CD4-positive, alpha-beta memory T cell (primary cell): ENCODE measurements at regions of chr21 and their contacts with region 1.

Region 1: DNA sequence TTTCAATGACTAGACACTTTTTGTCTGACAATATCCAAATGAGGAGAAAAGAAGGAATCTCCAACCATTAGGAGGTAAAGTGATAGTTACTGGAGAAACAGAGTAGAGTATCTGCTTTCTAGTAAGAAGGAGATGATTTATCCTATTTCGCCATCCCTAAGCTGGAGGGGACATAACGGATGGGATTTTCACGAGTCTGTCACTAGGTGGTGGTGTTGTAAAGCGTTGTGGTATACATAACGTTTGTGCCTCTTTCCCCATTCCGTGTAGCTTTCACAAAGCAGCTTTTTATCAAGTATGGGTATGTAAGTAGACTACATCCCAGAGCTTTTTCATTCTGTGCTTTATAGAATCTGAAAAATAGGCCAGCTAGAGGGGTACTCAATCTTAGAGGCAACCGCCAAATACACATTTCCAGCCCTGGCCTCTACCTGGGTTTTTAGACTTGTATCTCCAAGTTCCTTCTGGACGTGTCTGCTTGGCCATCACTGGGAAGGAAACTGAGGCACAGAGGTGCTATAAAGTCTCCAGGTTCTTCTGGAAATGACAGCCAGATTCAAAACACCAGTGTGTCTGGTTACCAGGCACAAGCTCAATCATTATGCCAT is 33.3 kb upstream of the FAM3B start:
- DNase-seq: peak; percentile 41 to 66 (median 65)
- H3K4me3 ChIP-seq: no peak overlapping the region
- H3K4me3 Mint-ChIP-seq: no peak overlapping the region
- H3K27ac ChIP-seq: no peak overlapping the region
- H3K27ac Mint-ChIP-seq: no peak overlapping the region
- H3K4me1 ChIP-seq: no peaks in the 10 kb centered on the region
- H3K4me1 Mint-ChIP-seq: peaks cover 0 to 1% (median 0%) of the 10 kb centered on the region in 4 donors
- H3K27me3 ChIP-seq: no peaks in the 10 kb centered on the region
- H3K27me3 Mint-ChIP-seq: peaks cover 9 to 24% of the 10 kb centered on the region in 2 donors

Region 2: GRCh38 chr21:39915881-39916280 is 1367.4 kb before region 1 on chr21:
- CTCF ChIA-PET with region 1: no interaction called
- POLR2A ChIA-PET with region 1: no interaction called
- intact Hi-C with region 1: no loop called
- DNase-seq: no peak
- H3K4me3 ChIP-seq: no peak overlapping the region
- H3K4me3 Mint-ChIP-seq: no peak overlapping the region
- H3K27ac ChIP-seq: no peak overlapping the region
- H3K27ac Mint-ChIP-seq: no peak overlapping the region
- H3K4me1 ChIP-seq: no peaks in the 10 kb centered on the region
- H3K4me1 Mint-ChIP-seq: no peaks in the 10 kb centered on the region
- H3K27me3 ChIP-seq: no peaks in the 10 kb centered on the region
- H3K27me3 Mint-ChIP-seq: no peaks in the 10 kb centered on the region

Region 3: DNA sequence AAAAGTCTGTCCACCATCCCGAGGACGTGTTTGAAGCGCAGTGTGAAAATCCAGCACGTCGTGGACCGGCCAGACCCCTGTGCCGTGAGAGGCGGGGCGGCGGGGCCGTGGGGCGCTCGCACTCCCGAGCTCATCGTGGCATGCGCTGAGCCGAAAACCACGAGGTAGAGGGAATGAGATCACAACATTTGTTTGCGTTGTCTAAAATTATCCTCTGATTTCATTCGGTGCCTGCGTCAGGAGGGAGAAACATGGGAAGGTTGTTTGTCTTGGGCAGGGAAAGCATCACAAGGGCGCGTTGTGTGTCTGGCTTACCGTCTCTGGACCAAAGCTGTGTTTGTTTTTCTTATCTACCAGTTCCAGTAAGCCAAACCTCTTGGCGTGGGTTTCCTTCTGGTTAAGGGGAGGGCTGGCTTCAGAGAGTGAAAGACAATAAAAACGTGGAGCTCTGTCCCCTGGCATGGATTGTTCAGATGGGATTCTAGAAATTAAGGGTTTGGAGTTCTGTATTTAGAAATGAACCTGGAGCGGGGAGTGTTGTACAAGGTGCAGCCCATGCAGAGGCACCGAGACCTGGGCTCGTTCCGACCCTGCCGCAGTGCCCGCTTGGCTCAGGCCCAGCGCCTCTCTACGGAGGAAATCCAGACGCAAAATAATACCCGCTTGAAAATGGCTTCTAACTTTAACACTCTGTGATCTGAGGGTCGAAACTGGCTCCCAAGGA is 35.6 kb before region 1 on chr21:
- CTCF ChIA-PET with region 1: no interaction called
- POLR2A ChIA-PET with region 1: no interaction called
- intact Hi-C with region 1: no loop called
- DNase-seq: no peak
- H3K4me3 ChIP-seq: no peak overlapping the region
- H3K4me3 Mint-ChIP-seq: no peak overlapping the region
- H3K27ac ChIP-seq: no peak overlapping the region
- H3K27ac Mint-ChIP-seq: no peak overlapping the region
- H3K4me1 ChIP-seq: no peaks in the 10 kb centered on the region
- H3K4me1 Mint-ChIP-seq: no peaks in the 10 kb centered on the region
- H3K27me3 ChIP-seq: no peaks in the 10 kb centered on the region
- H3K27me3 Mint-ChIP-seq: peaks cover 7 to 18% of the 10 kb centered on the region in 2 donors

Region 4: GRCh38 chr21:41361786-41362604 is 78.7 kb after region 1 on chr21 and contains the start of gene MX2:
- CTCF ChIA-PET with region 1: interaction called, 8 read pairs
- POLR2A ChIA-PET with region 1: interaction called, 7 read pairs
- intact Hi-C with region 1: loop called (anchors 1 kb)
- DNase-seq: peak; percentile 91 to 94 (median 94)
- H3K4me3 ChIP-seq: peak within 1 kb of the TSS; percentile 27 to 91
- H3K4me3 Mint-ChIP-seq: peak within 1 kb of the TSS; percentile 89 to 97 (median 94)
- H3K27ac ChIP-seq: peak within 1 kb of the TSS; percentile 93
- H3K27ac Mint-ChIP-seq: peak within 1 kb of the TSS; percentile 99 to 100 (median 100)
- H3K4me1 ChIP-seq: peaks cover 40% of the 10 kb centered on the region
- H3K4me1 Mint-ChIP-seq: peaks cover 37 to 61% (median 55%) of the 10 kb centered on the region in 4 donors
- H3K27me3 ChIP-seq: no peaks in the 10 kb centered on the region
- H3K27me3 Mint-ChIP-seq: no peaks in the 10 kb centered on the region
- total RNA-seq, gene MX2: 98.7 to 107 TPM

Region 5: DNA sequence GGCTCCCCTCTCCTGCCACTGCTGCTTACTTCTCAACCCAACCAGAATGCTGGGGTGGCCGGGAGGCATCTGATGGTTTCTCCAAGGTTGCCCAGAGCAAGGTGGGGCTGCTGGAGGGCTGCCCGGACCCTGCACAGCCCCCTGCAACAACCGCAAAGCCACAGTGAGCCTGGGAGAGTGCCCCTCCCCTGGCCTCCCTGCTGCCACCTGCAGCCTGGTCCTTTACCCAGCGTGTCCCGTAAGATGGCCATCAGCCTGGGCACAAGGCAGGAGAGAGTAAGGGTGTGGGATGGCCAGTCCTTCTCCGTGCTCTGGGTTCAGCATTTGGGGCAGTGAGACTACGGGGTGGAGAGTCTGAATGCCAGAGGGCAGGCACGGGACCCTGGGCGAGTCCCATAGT is 95.6 kb after region 1 on chr21:
- CTCF ChIA-PET with region 1: interaction called, 12 read pairs
- POLR2A ChIA-PET with region 1: no interaction called
- intact Hi-C with region 1: no loop called
- DNase-seq: no peak
- H3K4me3 ChIP-seq: no peak overlapping the region
- H3K4me3 Mint-ChIP-seq: no peak overlapping the region
- H3K27ac ChIP-seq: no peak overlapping the region
- H3K27ac Mint-ChIP-seq: no peak overlapping the region
- H3K4me1 ChIP-seq: peaks cover 1% of the 10 kb centered on the region
- H3K4me1 Mint-ChIP-seq: peaks cover 4 to 13% (median 8%) of the 10 kb centered on the region in 4 donors
- H3K27me3 ChIP-seq: no peaks in the 10 kb centered on the region
- H3K27me3 Mint-ChIP-seq: no peaks in the 10 kb centered on the region

Region 6: GRCh38 chr21:41425954-41426675 is 142.8 kb after region 1 on chr21 and contains the start of gene MX1:
- CTCF ChIA-PET with region 1: interaction called, 24 read pairs
- POLR2A ChIA-PET with region 1: no interaction called
- intact Hi-C with region 1: no loop called
- DNase-seq: peak; percentile 86 to 90 (median 88)
- H3K4me3 ChIP-seq: peak within 1 kb of the TSS; percentile 79 to 91
- H3K4me3 Mint-ChIP-seq: peak within 1 kb of the TSS; percentile 95 to 99 (median 98)
- H3K27ac ChIP-seq: peak within 1 kb of the TSS; percentile 88
- H3K27ac Mint-ChIP-seq: peak within 1 kb of the TSS; percentile 93 to 98 (median 96)
- H3K4me1 ChIP-seq: peaks cover 22% of the 10 kb centered on the region
- H3K4me1 Mint-ChIP-seq: peaks cover 27 to 69% (median 47%) of the 10 kb centered on the region in 4 donors
- H3K27me3 ChIP-seq: no peaks in the 10 kb centered on the region
- H3K27me3 Mint-ChIP-seq: no peaks in the 10 kb centered on the region
- total RNA-seq, gene MX1: 73.7 to 75.3 TPM

Region 7: GRCh38 chr21:41610042-41610839 is 326.9 kb after region 1 on chr21:
- CTCF ChIA-PET with region 1: no interaction called
- POLR2A ChIA-PET with region 1: no interaction called
- intact Hi-C with region 1: loop called (anchors 2 kb)
- DNase-seq: no peak
- H3K4me3 ChIP-seq: no peak overlapping the region
- H3K4me3 Mint-ChIP-seq: peak overlapping the region in 1 of 8 donors; percentile 18
- H3K27ac ChIP-seq: no peak overlapping the region
- H3K27ac Mint-ChIP-seq: no peak overlapping the region
- H3K4me1 ChIP-seq: no peaks in the 10 kb centered on the region
- H3K4me1 Mint-ChIP-seq: no peaks in the 10 kb centered on the region
- H3K27me3 ChIP-seq: no peaks in the 10 kb centered on the region
- H3K27me3 Mint-ChIP-seq: peaks cover 19 to 39% of the 10 kb centered on the region in 2 donors

Region 8: DNA sequence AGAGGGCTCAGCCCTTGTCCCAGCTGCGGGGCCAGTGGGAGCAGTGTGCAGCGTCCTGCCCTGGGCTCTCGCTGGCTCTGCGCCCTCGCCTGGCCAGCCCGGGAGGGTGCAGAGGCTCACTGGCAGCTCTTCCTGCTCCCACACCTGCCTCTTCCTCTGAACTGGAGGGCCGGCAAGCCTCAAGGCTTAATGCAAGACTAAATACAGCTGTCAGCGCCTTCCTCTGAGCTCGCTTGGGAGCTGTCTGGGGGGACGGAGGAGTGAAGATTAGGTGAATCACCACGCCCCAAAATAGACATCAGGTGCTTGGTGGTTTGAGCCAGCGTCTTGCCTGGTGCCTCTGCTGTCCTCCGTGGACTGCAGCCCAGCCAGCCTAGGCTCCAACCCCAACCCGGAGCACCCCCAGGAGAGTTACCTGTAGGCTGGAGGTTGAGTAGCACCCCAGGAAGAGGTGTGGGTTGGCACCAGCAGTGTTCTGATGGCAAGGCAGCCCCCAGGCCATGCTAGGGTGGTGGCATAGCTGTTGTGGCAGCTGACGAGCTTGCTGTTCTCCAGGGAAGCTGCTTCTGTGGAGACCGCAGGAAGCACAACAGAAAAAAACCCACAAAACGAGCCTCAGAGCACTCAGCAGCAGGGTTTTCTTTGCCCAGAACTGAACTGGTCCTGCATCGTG is 824.7 kb after region 1 on chr21:
- CTCF ChIA-PET with region 1: interaction called, 3 read pairs
- POLR2A ChIA-PET with region 1: no interaction called
- intact Hi-C with region 1: loop called (anchors 2 kb)
- DNase-seq: peak; percentile 53 to 73 (median 71)
- H3K4me3 ChIP-seq: no peak overlapping the region
- H3K4me3 Mint-ChIP-seq: peak overlapping the region in 6 of 8 donors; percentile 23 to 72 (median 54)
- H3K27ac ChIP-seq: no peak overlapping the region
- H3K27ac Mint-ChIP-seq: peak overlapping the region in 2 of 7 donors; percentile 43 to 62
- H3K4me1 ChIP-seq: peaks cover 12% of the 10 kb centered on the region
- H3K4me1 Mint-ChIP-seq: peaks cover 4 to 9% (median 4%) of the 10 kb centered on the region in 4 donors
- H3K27me3 ChIP-seq: no peaks in the 10 kb centered on the region
- H3K27me3 Mint-ChIP-seq: peaks cover 2% of the 10 kb centered on the region in 2 donors